Activated B cell treated with CpG ODN at 0.5 μM for 24 hours (primary cell): ENCODE measurements at regions of chr10 and their contacts with region 1.

Region 1: GRCh38 chr10:124688889-124689670 is 55.1 kb downstream of the FAM53B start:
- DNase-seq: no peak
- ATAC-seq: peak; percentile 51
- H3K4me3 Mint-ChIP-seq: no peak overlapping the region
- H3K27ac Mint-ChIP-seq: peak overlapping the region; percentile 86
- H3K4me1 Mint-ChIP-seq: peaks cover 84% of the 10 kb centered on the region
- H3K27me3 Mint-ChIP-seq: no peaks in the 10 kb centered on the region
- CTCF ChIP-seq: no peak

Region 2: GRCh38 chr10:124647421-124648130 is 41.5 kb before region 1 on chr10:
- CTCF ChIA-PET with region 1: interaction called, 5 read pairs
- POLR2A ChIA-PET with region 1: interaction called, 6 read pairs
- intact Hi-C with region 1: loop called (anchors 5 kb)
- DNase-seq: no peak
- ATAC-seq: peak; percentile 64
- H3K4me3 Mint-ChIP-seq: peak overlapping the region; percentile 62
- H3K27ac Mint-ChIP-seq: peak overlapping the region; percentile 88
- H3K4me1 Mint-ChIP-seq: peaks cover 100% of the 10 kb centered on the region
- H3K27me3 Mint-ChIP-seq: no peaks in the 10 kb centered on the region
- CTCF ChIP-seq: no peak

Region 3: GRCh38 chr10:124975977-124976514 is 287.0 kb after region 1 on chr10:
- CTCF ChIA-PET with region 1: no interaction called
- POLR2A ChIA-PET with region 1: no interaction called
- intact Hi-C with region 1: no loop called
- DNase-seq: no peak
- ATAC-seq: no peak
- H3K4me3 Mint-ChIP-seq: no peak overlapping the region
- H3K27ac Mint-ChIP-seq: no peak overlapping the region
- H3K4me1 Mint-ChIP-seq: peaks cover 7% of the 10 kb centered on the region
- H3K27me3 Mint-ChIP-seq: no peaks in the 10 kb centered on the region
- CTCF ChIP-seq: no peak

Region 4: DNA sequence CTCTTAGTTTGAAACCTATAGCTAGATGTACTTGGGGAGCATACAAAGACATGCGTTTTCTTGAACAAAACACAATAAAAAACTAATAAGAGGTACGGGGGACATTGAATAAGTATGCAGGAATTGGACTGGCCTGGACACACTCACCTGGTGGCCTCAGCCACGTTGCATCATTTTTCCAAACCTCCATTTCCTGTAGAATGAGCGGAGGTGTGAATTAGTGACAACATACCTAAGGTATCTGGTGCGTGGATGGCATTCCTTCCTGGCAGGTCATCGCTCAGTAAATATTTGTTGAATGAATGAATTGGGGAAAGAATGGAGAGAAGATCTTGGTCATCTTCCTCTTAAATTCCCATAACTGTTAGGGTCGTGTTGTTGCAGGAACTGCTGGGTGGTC is 574.5 kb after region 1 on chr10:
- CTCF ChIA-PET with region 1: no interaction called
- POLR2A ChIA-PET with region 1: no interaction called
- intact Hi-C with region 1: no loop called
- DNase-seq: no peak
- ATAC-seq: no peak
- H3K4me3 Mint-ChIP-seq: no peak overlapping the region
- H3K27ac Mint-ChIP-seq: no peak overlapping the region
- H3K4me1 Mint-ChIP-seq: no peaks in the 10 kb centered on the region
- H3K27me3 Mint-ChIP-seq: no peaks in the 10 kb centered on the region
- CTCF ChIP-seq: no peak

Region 5: GRCh38 chr10:125274961-125275360 is 585.9 kb after region 1 on chr10:
- CTCF ChIA-PET with region 1: no interaction called
- POLR2A ChIA-PET with region 1: no interaction called
- intact Hi-C with region 1: no loop called
- DNase-seq: no peak
- ATAC-seq: no peak
- H3K4me3 Mint-ChIP-seq: no peak overlapping the region
- H3K27ac Mint-ChIP-seq: no peak overlapping the region
- H3K4me1 Mint-ChIP-seq: no peaks in the 10 kb centered on the region
- H3K27me3 Mint-ChIP-seq: peaks cover 19% of the 10 kb centered on the region
- CTCF ChIP-seq: no peak